ENCODE measurements at regions of chr11 and their contacts with region 1.

Region 1: DNA sequence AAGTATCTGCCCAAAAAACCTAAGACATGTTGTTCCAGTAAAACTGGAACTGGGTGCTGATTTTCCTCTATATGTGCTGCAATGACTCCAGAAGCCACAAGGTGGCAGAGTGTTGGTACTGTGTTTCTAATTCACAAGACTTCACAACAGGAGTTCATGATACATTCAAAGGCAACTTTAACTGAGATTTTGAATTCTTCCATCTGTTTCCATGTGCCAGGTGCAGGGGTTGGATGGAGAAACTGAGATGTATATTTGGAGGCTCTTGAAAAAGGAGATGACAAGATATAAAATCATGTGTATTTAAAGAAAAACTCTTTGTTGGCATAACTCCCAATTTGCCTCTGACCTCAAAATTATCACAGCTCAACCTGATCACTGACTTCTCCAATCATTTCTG is 1098.6 kb upstream of the CCDC90B start:
- DNase-seq: peak; percentile 30
- ATAC-seq: no peak
- H3K4me3 ChIP-seq: no peak overlapping the region
- H3K27ac ChIP-seq: no peak overlapping the region
- H3K4me1 ChIP-seq: no peaks in the 10 kb centered on the region
- H3K27me3 ChIP-seq: no peaks in the 10 kb centered on the region
- CTCF ChIP-seq: peak; percentile 62
- EP300 ChIP-seq: no peak
- POLR2A ChIP-seq: no peak
- RAD21 ChIP-seq: no peak

Region 2: DNA sequence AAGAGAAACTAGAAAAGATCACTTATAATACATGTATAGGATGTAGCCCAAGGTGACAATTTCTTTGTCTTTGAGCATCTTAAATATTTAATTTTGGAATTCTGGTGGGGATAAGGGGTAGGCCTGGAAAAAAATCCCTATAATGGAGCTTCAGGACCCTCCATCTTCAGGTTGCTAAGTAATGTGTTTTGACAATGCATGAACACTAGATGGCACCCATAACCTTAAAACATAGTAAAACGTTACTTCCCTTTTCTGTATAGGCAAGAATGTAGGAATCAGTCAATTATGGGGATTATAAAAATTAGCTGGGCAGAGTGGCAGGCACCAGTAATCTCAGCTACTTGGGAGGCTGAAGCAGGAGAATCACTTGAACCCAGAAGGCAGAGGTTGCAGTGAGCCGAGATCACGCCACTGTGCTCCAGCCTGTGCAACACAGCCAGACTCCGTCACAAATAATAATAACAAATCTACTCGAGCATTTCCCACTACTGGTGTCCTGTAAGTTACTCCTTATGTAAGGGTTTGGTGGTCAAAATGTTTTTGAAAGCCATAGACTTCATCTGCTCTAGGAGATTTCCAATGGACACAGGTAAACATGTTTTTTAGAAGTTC is 556.7 kb before region 1 on chr11:
- CTCF ChIA-PET with region 1: interaction called, 3 read pairs
- POLR2A ChIA-PET with region 1: no interaction called
- in situ Hi-C with region 1: loop called (anchors 10 kb)
- intact Hi-C with region 1: loop called (anchors 2 kb)
- DNase-seq: peak; percentile 42
- ATAC-seq: peak; percentile 84
- H3K4me3 ChIP-seq: peak overlapping the region; percentile 14 to 36 (median 26); a peak in 2 of 6 replicates
- H3K27ac ChIP-seq: no peak overlapping the region
- H3K4me1 ChIP-seq: no peaks in the 10 kb centered on the region
- H3K27me3 ChIP-seq: no peaks in the 10 kb centered on the region
- CTCF ChIP-seq: peak; percentile 74
- EP300 ChIP-seq: no peak
- POLR2A ChIP-seq: no peak
- RAD21 ChIP-seq: peak; percentile 64

Region 3: DNA sequence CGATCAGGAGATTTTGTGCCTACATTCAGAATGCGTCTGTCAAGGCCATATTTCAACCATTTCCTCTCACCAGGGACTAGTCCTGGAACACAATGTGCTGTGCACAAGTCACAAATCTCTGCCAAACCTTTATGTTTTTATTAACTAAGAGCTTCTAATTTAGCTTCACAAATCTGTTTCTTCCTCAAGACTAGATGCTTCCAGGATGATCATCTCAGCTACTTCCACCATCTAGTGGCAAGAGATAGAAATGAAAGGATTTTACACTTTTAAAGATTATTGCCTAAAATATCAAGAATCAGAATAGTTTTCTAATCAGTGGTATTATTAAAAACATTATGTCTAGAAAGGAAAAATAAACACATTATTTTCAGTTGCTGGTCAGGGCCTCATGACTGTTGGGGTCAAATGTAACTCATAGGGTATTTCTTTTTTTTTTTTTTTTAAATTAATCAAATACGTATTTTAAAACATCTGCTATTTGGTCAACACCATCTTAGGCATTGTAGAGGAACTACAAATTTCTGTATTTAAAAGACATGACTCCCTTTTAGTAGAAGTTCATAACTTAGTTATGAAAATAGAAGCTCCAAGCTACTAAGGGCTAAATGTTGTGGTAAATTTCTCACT is 139.8 kb after region 1 on chr11:
- CTCF ChIA-PET with region 1: no interaction called
- POLR2A ChIA-PET with region 1: no interaction called
- in situ Hi-C with region 1: no loop called
- intact Hi-C with region 1: loop called (anchors 5 kb)
- DNase-seq: no peak
- ATAC-seq: no peak
- H3K4me3 ChIP-seq: no peak overlapping the region
- H3K27ac ChIP-seq: no peak overlapping the region
- H3K4me1 ChIP-seq: no peaks in the 10 kb centered on the region
- H3K27me3 ChIP-seq: no peaks in the 10 kb centered on the region
- CTCF ChIP-seq: peak; percentile 26
- EP300 ChIP-seq: no peak
- POLR2A ChIP-seq: no peak
- RAD21 ChIP-seq: no peak

Region 4: GRCh38 chr11:84714316-84714780 is 329.6 kb after region 1 on chr11:
- CTCF ChIA-PET with region 1: no interaction called
- POLR2A ChIA-PET with region 1: no interaction called
- in situ Hi-C with region 1: no loop called
- intact Hi-C with region 1: loop called (anchors 10 kb)
- DNase-seq: peak; percentile 58
- ATAC-seq: peak; percentile 92
- H3K4me3 ChIP-seq: no peak overlapping the region
- H3K27ac ChIP-seq: no peak overlapping the region
- H3K4me1 ChIP-seq: no peaks in the 10 kb centered on the region
- H3K27me3 ChIP-seq: no peaks in the 10 kb centered on the region; a peak in 1 of 5 replicates
- CTCF ChIP-seq: peak; percentile 70
- EP300 ChIP-seq: no peak
- POLR2A ChIP-seq: no peak
- RAD21 ChIP-seq: peak; percentile 35; the same call in 1 of the 2 replicates

Measured in HepG2 (cell line).